ENCODE measurements at regions of chr1 and their contacts with region 1.

Region 1: GRCh38 chr1:210373885-210374599 is 45.3 kb downstream of the HHAT start:
- DNase-seq: peak; percentile 75 to 83 (median 79)
- H3K4me3 ChIP-seq: no peak overlapping the region
- H3K4me3 Mint-ChIP-seq: peak overlapping the region in 7 of 8 donors; percentile 24 to 67 (median 58)
- H3K27ac ChIP-seq: peak overlapping the region; percentile 17
- H3K27ac Mint-ChIP-seq: peak overlapping the region; percentile 69 to 93 (median 89)
- H3K4me1 ChIP-seq: peaks cover 18% of the 10 kb centered on the region
- H3K4me1 Mint-ChIP-seq: peaks cover 15 to 27% (median 22%) of the 10 kb centered on the region in 4 donors
- H3K27me3 ChIP-seq: no peaks in the 10 kb centered on the region
- H3K27me3 Mint-ChIP-seq: no peaks in the 10 kb centered on the region

Region 2: GRCh38 chr1:210328746-210329503 is 45.1 kb before region 1 on chr1 and contains the start of gene HHAT:
- CTCF ChIA-PET with region 1: interaction called, 13 read pairs
- POLR2A ChIA-PET with region 1: interaction called, 9 read pairs
- intact Hi-C with region 1: no loop called
- DNase-seq: peak; percentile 63 to 70 (median 68)
- H3K4me3 ChIP-seq: peak within 1 kb of the TSS; percentile 50 to 75
- H3K4me3 Mint-ChIP-seq: peak within 1 kb of the TSS; percentile 94 to 99 (median 97)
- H3K27ac ChIP-seq: peak within 1 kb of the TSS; percentile 73
- H3K27ac Mint-ChIP-seq: peak within 1 kb of the TSS; percentile 83 to 98 (median 95)
- H3K4me1 ChIP-seq: peaks cover 53% of the 10 kb centered on the region
- H3K4me1 Mint-ChIP-seq: peaks cover 30 to 52% (median 42%) of the 10 kb centered on the region in 4 donors
- H3K27me3 ChIP-seq: no peaks in the 10 kb centered on the region
- H3K27me3 Mint-ChIP-seq: peaks cover 0 to 4% of the 10 kb centered on the region in 2 donors
- total RNA-seq, gene HHAT: 6.5 to 6.8 TPM

Region 3: GRCh38 chr1:210342986-210343780 is 30.9 kb before region 1 on chr1:
- CTCF ChIA-PET with region 1: interaction called, 14 read pairs
- POLR2A ChIA-PET with region 1: interaction called, 3 read pairs
- intact Hi-C with region 1: no loop called
- DNase-seq: peak in 1 of 5 donors; percentile 8
- H3K4me3 ChIP-seq: no peak overlapping the region
- H3K4me3 Mint-ChIP-seq: no peak overlapping the region
- H3K27ac ChIP-seq: no peak overlapping the region
- H3K27ac Mint-ChIP-seq: no peak overlapping the region
- H3K4me1 ChIP-seq: peaks cover 46% of the 10 kb centered on the region
- H3K4me1 Mint-ChIP-seq: peaks cover 0 to 21% (median 12%) of the 10 kb centered on the region in 4 donors
- H3K27me3 ChIP-seq: no peaks in the 10 kb centered on the region
- H3K27me3 Mint-ChIP-seq: no peaks in the 10 kb centered on the region

Region 4: GRCh38 chr1:210360852-210361477 is 13.1 kb before region 1 on chr1:
- CTCF ChIA-PET with region 1: interaction called, 71 read pairs
- POLR2A ChIA-PET with region 1: no interaction called
- intact Hi-C with region 1: no loop called
- DNase-seq: peak in 4 of 5 donors; percentile 17 to 34 (median 21)
- H3K4me3 ChIP-seq: no peak overlapping the region
- H3K4me3 Mint-ChIP-seq: no peak overlapping the region
- H3K27ac ChIP-seq: no peak overlapping the region
- H3K27ac Mint-ChIP-seq: no peak overlapping the region
- H3K4me1 ChIP-seq: no peaks in the 10 kb centered on the region
- H3K4me1 Mint-ChIP-seq: peaks cover 0 to 9% (median 3%) of the 10 kb centered on the region in 4 donors
- H3K27me3 ChIP-seq: no peaks in the 10 kb centered on the region
- H3K27me3 Mint-ChIP-seq: no peaks in the 10 kb centered on the region

Region 5: DNA sequence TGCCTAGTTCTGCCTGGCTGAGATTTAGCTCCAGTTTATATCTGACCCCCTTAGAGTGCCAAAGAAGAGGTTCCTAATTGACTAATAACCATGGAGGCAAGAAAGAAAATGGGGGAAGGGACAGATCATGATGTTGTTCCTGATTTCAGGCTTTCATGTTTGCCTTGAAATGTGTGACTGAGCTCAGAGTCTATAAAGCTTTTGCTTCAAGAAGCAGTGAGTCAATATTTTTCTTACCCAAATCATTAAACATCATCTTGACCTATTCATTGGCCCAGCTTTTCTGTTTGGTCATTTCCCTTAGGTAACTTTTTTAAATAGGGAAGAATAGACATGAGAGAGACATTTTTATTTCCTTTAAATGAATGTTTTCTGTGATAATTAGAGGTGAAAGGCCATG is 10.6 kb after region 1 on chr1:
- CTCF ChIA-PET with region 1: interaction called, 17 read pairs
- POLR2A ChIA-PET with region 1: interaction called, 4 read pairs
- intact Hi-C with region 1: no loop called
- DNase-seq: no peak
- H3K4me3 ChIP-seq: no peak overlapping the region
- H3K4me3 Mint-ChIP-seq: no peak overlapping the region
- H3K27ac ChIP-seq: no peak overlapping the region
- H3K27ac Mint-ChIP-seq: no peak overlapping the region
- H3K4me1 ChIP-seq: no peaks in the 10 kb centered on the region
- H3K4me1 Mint-ChIP-seq: no peaks in the 10 kb centered on the region
- H3K27me3 ChIP-seq: no peaks in the 10 kb centered on the region
- H3K27me3 Mint-ChIP-seq: no peaks in the 10 kb centered on the region

Region 6: DNA sequence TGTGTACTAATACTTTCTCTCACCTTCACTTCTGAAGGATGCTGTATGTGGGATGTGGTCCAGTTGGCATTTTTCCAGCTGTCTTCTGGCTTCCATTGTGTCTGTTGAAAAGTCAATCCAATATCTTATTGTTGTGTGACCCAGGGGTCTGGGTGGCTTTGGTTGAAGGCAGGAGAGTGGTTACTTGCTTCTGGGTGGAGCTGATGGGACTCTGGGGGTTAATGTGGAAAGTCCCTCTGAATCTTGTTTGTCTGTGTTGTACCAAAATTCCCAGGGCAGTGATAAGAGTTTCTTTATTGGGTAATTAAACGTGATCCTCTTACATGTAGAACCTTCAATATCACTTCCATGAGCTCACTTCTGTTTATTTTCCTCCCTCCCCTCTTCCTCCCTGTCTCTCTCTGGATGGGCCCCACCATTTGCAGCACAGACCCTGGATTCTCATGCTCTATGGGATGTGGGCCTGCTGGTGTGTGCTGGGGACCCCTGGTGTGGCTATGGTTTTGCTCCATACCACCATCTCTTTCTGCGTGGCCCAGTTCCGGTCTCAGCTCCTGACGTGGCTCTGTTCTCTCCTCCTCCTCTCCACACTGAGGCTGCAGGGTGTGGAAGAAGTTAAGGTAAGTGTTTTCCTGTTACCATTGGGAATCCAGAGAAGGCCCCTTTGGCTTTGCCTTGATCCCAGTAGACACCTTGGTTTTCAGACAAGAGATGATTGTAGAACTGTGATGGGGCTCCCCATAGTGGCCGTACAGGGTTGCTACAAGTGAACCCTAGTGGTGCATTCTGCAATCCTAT is 26.2 kb after region 1 on chr1:
- CTCF ChIA-PET with region 1: interaction called, 24 read pairs
- POLR2A ChIA-PET with region 1: interaction called, 5 read pairs
- intact Hi-C with region 1: loop called (anchors 1 kb)
- DNase-seq: peak; percentile 45 to 57 (median 46)
- H3K4me3 ChIP-seq: no peak overlapping the region
- H3K4me3 Mint-ChIP-seq: peak overlapping the region in 6 of 8 donors; percentile 14 to 78 (median 70)
- H3K27ac ChIP-seq: no peak overlapping the region
- H3K27ac Mint-ChIP-seq: peak overlapping the region; percentile 70 to 91 (median 85)
- H3K4me1 ChIP-seq: peaks cover 16% of the 10 kb centered on the region
- H3K4me1 Mint-ChIP-seq: peaks cover 19 to 29% (median 23%) of the 10 kb centered on the region in 4 donors
- H3K27me3 ChIP-seq: no peaks in the 10 kb centered on the region
- H3K27me3 Mint-ChIP-seq: peaks cover 0 to 2% of the 10 kb centered on the region in 2 donors

Region 7: GRCh38 chr1:210653771-210654170 is 279.7 kb after region 1 on chr1:
- CTCF ChIA-PET with region 1: no interaction called
- POLR2A ChIA-PET with region 1: no interaction called
- intact Hi-C with region 1: no loop called
- DNase-seq: no peak
- H3K4me3 ChIP-seq: no peak overlapping the region
- H3K4me3 Mint-ChIP-seq: no peak overlapping the region
- H3K27ac ChIP-seq: no peak overlapping the region
- H3K27ac Mint-ChIP-seq: no peak overlapping the region
- H3K4me1 ChIP-seq: no peaks in the 10 kb centered on the region
- H3K4me1 Mint-ChIP-seq: no peaks in the 10 kb centered on the region
- H3K27me3 ChIP-seq: no peaks in the 10 kb centered on the region
- H3K27me3 Mint-ChIP-seq: no peaks in the 10 kb centered on the region